ENCODE measurements at regions of chr11 and their contacts with region 1.

Region 1: GRCh38 chr11:44167046-44167445 is 71.6 kb downstream of the EXT2 start:
- DNase-seq: no peak
- H3K4me3 ChIP-seq: no peak overlapping the region
- CTCF ChIP-seq: no peak

Region 2: DNA sequence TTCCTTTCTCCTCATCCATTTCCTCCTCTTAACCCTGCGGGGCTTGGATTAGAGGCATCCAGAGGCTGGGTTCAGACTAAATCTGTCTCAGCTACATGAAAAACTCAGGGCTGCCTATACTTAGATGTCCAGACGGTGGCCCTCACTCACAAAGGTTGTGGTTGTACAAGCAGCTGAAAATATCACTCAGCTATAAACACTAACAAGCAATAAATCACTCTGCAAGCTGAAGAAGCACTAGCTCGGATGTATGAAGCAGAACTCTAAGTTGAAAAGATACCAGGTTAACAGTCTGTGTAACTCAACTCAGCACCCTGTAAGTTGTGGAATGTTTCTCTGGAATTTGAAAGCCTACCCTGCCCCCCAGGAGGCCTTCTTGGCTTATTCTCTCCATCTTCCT is 11.3 kb after region 1 on chr11:
- CTCF ChIA-PET with region 1: interaction called, 10 read pairs
- POLR2A ChIA-PET with region 1: no interaction called
- DNase-seq: peak; percentile 59
- H3K4me3 ChIP-seq: no peak overlapping the region
- CTCF ChIP-seq: peak; percentile 40